ENCODE measurements at regions of chr7 and their contacts with region 1.

Region 1: DNA sequence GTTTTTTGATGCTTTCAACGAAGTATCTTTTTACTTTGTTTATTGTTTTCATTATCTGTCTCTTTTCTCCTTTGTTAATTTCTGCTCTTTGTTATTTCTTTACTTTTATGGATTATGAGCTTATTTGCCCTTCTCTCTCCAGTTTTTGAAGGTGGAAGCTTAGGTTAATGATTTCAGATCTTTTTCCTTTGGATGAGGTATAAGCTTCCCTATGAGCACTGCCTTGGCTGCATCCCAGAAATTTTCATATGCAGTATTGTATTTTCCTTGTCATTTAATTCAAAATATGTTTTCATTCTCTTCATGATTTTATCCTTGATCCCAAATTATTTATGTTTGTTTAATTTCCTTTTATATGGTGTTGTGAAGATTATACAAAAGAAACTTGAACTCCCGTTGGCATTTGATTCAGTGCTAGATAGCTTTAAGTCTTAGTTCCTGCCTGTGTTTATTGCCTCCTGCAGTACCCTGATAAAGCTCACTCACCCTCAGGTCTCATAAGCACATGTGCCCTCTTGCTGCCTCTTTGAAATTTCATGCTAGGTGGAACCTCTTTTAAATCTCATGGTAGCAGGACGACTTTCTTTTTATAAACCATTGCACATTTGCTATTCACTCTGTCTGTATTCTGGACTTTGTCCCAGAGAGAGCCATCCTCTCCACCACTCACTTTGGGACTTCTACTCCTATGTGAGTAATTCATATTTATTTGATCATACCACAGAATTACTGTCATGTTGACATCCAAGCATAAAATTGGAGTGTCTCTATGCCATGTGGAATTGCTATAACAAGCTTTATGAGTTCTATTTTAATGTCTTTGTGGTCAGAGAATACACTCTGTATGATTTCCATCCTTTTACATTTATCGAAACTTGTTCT is 23.0 kb upstream of the CEP41 start:
- DNase-seq: peak in 2 of 4 experiments; percentile 51
- ATAC-seq: peak; percentile 89
- H3K4me3 ChIP-seq: no peak overlapping the region
- H3K27ac ChIP-seq: no peak overlapping the region
- H3K4me1 ChIP-seq: 0 out of 5 replicates have a peak, but pooled peaks cover 0 to 4% of the 10 kb centered on the region in 2 experiments
- H3K27me3 ChIP-seq: no peaks in the 10 kb centered on the region
- CTCF ChIP-seq: peak in 2 of 3 experiments; percentile 19 to 30; a peak in 2 of 6 replicates
- EP300 ChIP-seq: peak; percentile 16; the same call in 1 of the 2 replicates
- POLR2A ChIP-seq: no peak
- RAD21 ChIP-seq: peak in 1 of 2 experiments; percentile 18; a peak in 1 of 4 replicates

Region 2: GRCh38 chr7:130174237-130174959 is 289.4 kb before region 1 on chr7:
- CTCF ChIA-PET with region 1: no interaction called
- POLR2A ChIA-PET with region 1: no interaction called
- in situ Hi-C with region 1: no loop called
- intact Hi-C with region 1: no loop called
- DNase-seq: no peak
- ATAC-seq: no peak
- H3K4me3 ChIP-seq: no peak overlapping the region
- H3K27ac ChIP-seq: no peak overlapping the region
- H3K4me1 ChIP-seq: no peaks in the 10 kb centered on the region
- H3K27me3 ChIP-seq: no peaks in the 10 kb centered on the region
- CTCF ChIP-seq: no peak
- EP300 ChIP-seq: no peak
- POLR2A ChIP-seq: no peak
- RAD21 ChIP-seq: no peak

Region 3: DNA sequence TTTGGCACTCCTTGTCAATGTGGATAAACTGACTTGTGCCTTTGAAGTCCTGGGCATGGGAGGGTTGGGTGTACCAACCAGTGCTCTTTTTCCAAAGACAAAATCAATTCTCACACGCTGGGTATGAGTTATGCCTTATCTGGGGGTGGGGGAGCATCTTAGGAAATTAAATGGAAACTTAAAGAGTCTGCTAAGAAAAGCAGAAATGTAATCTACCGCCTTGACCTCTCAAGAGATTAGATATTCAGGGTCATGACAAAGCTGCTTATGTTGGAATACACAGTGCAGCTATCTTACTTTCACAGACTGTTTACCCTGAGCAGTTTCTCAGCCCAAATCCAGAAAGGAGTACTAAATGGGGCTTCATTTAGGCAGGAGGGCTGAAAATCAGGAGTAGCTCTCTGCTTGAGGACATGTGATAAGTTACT is 30.7 kb after region 1 on chr7:
- CTCF ChIA-PET with region 1: no interaction called
- POLR2A ChIA-PET with region 1: no interaction called
- in situ Hi-C with region 1: no loop called
- intact Hi-C with region 1: loop called (anchors 1 kb)
- DNase-seq: peak in 3 of 4 experiments; percentile 33 to 68 (median 59)
- ATAC-seq: peak; percentile 88
- H3K4me3 ChIP-seq: no peak overlapping the region
- H3K27ac ChIP-seq: no peak overlapping the region
- H3K4me1 ChIP-seq: peaks cover 8 to 11% of the 10 kb centered on the region in 2 experiments; a peak in 4 of 5 replicates
- H3K27me3 ChIP-seq: peaks cover 0 to 12% of the 10 kb centered on the region in 2 experiments; a peak in 2 of 5 replicates
- CTCF ChIP-seq: no peak
- EP300 ChIP-seq: peak; percentile 86
- POLR2A ChIP-seq: no peak
- RAD21 ChIP-seq: no peak; a peak in 1 of 4 replicates